ENCODE measurements at regions of chr14 and their contacts with region 1.

Region 1: DNA sequence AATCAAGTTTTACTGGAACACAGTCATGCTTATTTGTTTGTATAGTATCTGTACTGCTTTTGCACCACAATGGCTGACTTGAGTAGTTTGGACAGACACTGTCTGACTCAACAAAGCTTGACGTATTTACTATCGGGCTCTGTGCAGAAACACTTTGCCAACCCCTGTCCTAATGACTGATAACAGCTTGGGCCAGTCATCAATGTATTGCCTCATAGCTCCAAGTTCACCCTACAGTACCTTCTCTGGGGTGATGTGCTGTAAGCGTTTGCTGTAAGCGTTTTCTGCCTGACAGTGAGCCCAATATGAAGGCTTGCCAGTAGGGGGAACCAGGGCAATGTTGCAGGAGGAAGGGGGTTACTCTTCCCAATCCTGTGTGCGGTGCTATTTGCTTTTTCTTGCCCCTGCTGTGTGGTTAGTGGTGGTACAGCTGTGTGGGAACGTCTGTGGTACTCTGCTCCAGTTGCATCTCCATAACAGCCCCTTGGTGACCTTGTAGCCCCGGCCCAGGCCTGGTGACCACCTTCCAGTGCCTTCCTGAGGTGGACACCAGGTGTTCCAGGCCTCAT is 5.4 kb upstream of the CCDC177 start:
- DNase-seq: no peak
- ATAC-seq: peak; percentile 74
- H3K4me3 ChIP-seq: no peak overlapping the region
- H3K27ac ChIP-seq: no peak overlapping the region
- H3K4me1 ChIP-seq: no peaks in the 10 kb centered on the region
- H3K27me3 ChIP-seq: peaks cover 0 to 1% of the 10 kb centered on the region in 2 experiments; a peak in 1 of 4 replicates
- CTCF ChIP-seq: peak; percentile 43 to 53 (median 47)
- EP300 ChIP-seq: no peak
- POLR2A ChIP-seq: no peak
- RAD21 ChIP-seq: peak; percentile 39

Region 2: DNA sequence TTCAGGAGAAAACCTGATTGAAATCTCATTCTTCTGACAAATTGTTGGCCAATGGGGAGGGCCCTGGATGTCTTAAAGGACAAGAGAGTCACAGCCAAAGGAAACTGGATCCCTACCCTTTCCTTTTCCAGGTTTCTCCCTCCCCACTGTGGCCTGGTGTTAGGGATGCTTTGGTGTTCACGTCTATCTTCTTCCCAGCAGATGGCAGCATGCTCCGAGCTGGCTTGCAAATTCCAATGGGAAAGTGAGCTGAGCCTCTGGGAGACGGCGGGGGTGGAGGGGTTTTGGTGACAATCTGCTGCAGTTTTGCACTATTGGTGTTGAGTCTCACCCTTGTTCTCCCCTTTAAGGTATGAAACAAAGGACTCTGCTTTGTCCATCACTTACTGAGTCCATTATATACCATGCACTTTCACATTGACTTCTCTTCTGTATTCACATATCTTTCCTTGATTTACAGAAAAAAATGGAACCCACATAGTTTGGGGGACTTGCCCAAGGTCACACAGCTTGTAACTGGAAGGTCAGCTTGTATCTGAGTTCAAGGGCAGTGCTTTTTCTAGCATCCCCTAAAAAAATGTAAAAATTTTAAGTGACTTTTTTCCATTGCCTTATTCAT is 44.8 kb before region 1 on chr14:
- CTCF ChIA-PET with region 1: no interaction called
- POLR2A ChIA-PET with region 1: no interaction called
- RAD21 ChIA-PET with region 1: no interaction called
- SMC1A ChIA-PET with region 1: no interaction called
- in situ Hi-C with region 1: no loop called
- intact Hi-C with region 1: no loop called
- DNase-seq: no peak
- ATAC-seq: no peak
- H3K4me3 ChIP-seq: no peak overlapping the region
- H3K27ac ChIP-seq: no peak overlapping the region
- H3K4me1 ChIP-seq: peaks cover 1% of the 10 kb centered on the region
- H3K27me3 ChIP-seq: peaks cover 0 to 3% of the 10 kb centered on the region in 2 experiments; a peak in 2 of 4 replicates
- CTCF ChIP-seq: peak; percentile 30 to 44 (median 38); a peak in 4 of 6 replicates
- EP300 ChIP-seq: no peak
- POLR2A ChIP-seq: no peak
- RAD21 ChIP-seq: peak; percentile 43

Region 3: DNA sequence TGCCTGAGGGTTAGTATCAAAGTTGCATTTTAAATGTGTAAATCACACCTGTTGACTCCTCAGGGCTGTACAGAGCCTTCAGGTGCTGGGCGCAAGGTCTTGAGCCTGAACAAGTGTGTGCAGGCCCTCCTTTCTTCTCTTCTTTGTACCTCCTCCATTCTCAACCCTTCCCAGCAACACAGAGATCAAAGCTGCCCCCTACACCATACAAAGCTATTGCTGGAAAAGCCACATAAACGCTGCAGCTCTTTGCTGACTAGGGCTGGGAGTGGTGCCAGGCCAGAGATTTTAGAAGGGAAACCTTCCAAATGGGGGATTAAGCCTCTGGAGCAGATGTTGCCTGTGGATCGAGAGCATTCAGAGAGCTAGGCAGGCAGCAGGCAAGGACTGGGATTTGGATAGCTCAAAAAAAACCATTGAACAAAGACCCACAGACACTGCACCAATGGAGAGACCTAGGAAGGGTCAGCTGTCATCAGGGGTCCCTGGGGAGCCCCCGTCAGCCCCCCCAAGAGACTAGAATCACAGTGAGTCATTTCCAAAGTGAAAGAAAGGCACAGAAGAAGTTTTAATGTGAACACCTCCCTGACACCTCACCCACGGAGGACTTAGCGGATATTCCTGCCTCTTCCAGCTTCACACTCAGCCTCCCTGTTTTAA is 13.1 kb after region 1 on chr14:
- CTCF ChIA-PET with region 1: interaction called, 14 read pairs
- POLR2A ChIA-PET with region 1: no interaction called
- RAD21 ChIA-PET with region 1: interaction called, 4 read pairs
- SMC1A ChIA-PET with region 1: interaction called, 4 read pairs
- in situ Hi-C with region 1: no loop called
- intact Hi-C with region 1: no loop called
- DNase-seq: no peak
- ATAC-seq: peak; percentile 86
- H3K4me3 ChIP-seq: no peak overlapping the region
- H3K27ac ChIP-seq: no peak overlapping the region
- H3K4me1 ChIP-seq: peaks cover 4% of the 10 kb centered on the region; the same call in 1 of the 2 replicates
- H3K27me3 ChIP-seq: no peaks in the 10 kb centered on the region
- CTCF ChIP-seq: no peak
- EP300 ChIP-seq: no peak
- POLR2A ChIP-seq: no peak
- RAD21 ChIP-seq: no peak